CD4-positive, alpha-beta memory T cell (primary cell): ENCODE measurements at regions of chr15 and their contacts with region 1.

Region 1: GRCh38 chr15:89358755-89359439 is 24.3 kb upstream of the POLG start:
- DNase-seq: peak; percentile 74 to 85 (median 80)
- H3K4me3 ChIP-seq: peak overlapping the region in 1 of 2 donors; percentile 61
- H3K4me3 Mint-ChIP-seq: peak overlapping the region; percentile 73 to 87 (median 84)
- H3K27ac ChIP-seq: no peak overlapping the region
- H3K27ac Mint-ChIP-seq: peak overlapping the region in 3 of 7 donors; percentile 47 to 60 (median 59)
- H3K4me1 ChIP-seq: peaks cover 17% of the 10 kb centered on the region
- H3K4me1 Mint-ChIP-seq: peaks cover 0 to 33% (median 11%) of the 10 kb centered on the region in 4 donors
- H3K27me3 ChIP-seq: peaks cover 58% of the 10 kb centered on the region
- H3K27me3 Mint-ChIP-seq: peaks cover 59 to 68% of the 10 kb centered on the region in 2 donors

Region 2: GRCh38 chr15:89321521-89322410 is 37.1 kb before region 1 on chr15:
- CTCF ChIA-PET with region 1: interaction called, 28 read pairs
- POLR2A ChIA-PET with region 1: no interaction called
- intact Hi-C with region 1: no loop called
- DNase-seq: no peak
- H3K4me3 ChIP-seq: no peak overlapping the region
- H3K4me3 Mint-ChIP-seq: no peak overlapping the region
- H3K27ac ChIP-seq: no peak overlapping the region
- H3K27ac Mint-ChIP-seq: peak overlapping the region in 4 of 7 donors; percentile 10 to 76 (median 58)
- H3K4me1 ChIP-seq: no peaks in the 10 kb centered on the region
- H3K4me1 Mint-ChIP-seq: peaks cover 0 to 28% (median 8%) of the 10 kb centered on the region in 4 donors
- H3K27me3 ChIP-seq: no peaks in the 10 kb centered on the region
- H3K27me3 Mint-ChIP-seq: no peaks in the 10 kb centered on the region

Region 3: GRCh38 chr15:89334510-89335288 is 24.2 kb before region 1 on chr15 and contains the start of gene POLG:
- CTCF ChIA-PET with region 1: interaction called, 73 read pairs
- POLR2A ChIA-PET with region 1: interaction called, 12 read pairs
- intact Hi-C with region 1: loop called (anchors 2 kb)
- DNase-seq: peak; percentile 99 to 100 (median 99)
- H3K4me3 ChIP-seq: peak within 1 kb of the TSS; percentile 81 to 92
- H3K4me3 Mint-ChIP-seq: peak within 1 kb of the TSS; percentile 90 to 100 (median 94)
- H3K27ac ChIP-seq: peak within 1 kb of the TSS; percentile 69
- H3K27ac Mint-ChIP-seq: peak within 1 kb of the TSS; percentile 88 to 100 (median 98)
- H3K4me1 ChIP-seq: peaks cover 54% of the 10 kb centered on the region
- H3K4me1 Mint-ChIP-seq: peaks cover 37 to 59% (median 47%) of the 10 kb centered on the region in 4 donors
- H3K27me3 ChIP-seq: no peaks in the 10 kb centered on the region
- H3K27me3 Mint-ChIP-seq: peaks cover 2 to 7% of the 10 kb centered on the region in 2 donors
- total RNA-seq, gene POLG: 148 to 151 TPM

Region 4: GRCh38 chr15:89371228-89372079 is 12.6 kb after region 1 on chr15:
- CTCF ChIA-PET with region 1: interaction called, 19 read pairs
- POLR2A ChIA-PET with region 1: no interaction called
- intact Hi-C with region 1: no loop called
- DNase-seq: no peak
- H3K4me3 ChIP-seq: no peak overlapping the region
- H3K4me3 Mint-ChIP-seq: no peak overlapping the region
- H3K27ac ChIP-seq: no peak overlapping the region
- H3K27ac Mint-ChIP-seq: no peak overlapping the region
- H3K4me1 ChIP-seq: peaks cover 20% of the 10 kb centered on the region
- H3K4me1 Mint-ChIP-seq: peaks cover 7 to 27% (median 14%) of the 10 kb centered on the region in 4 donors
- H3K27me3 ChIP-seq: peaks cover 43% of the 10 kb centered on the region
- H3K27me3 Mint-ChIP-seq: peaks cover 54 to 57% of the 10 kb centered on the region in 2 donors

Region 5: DNA sequence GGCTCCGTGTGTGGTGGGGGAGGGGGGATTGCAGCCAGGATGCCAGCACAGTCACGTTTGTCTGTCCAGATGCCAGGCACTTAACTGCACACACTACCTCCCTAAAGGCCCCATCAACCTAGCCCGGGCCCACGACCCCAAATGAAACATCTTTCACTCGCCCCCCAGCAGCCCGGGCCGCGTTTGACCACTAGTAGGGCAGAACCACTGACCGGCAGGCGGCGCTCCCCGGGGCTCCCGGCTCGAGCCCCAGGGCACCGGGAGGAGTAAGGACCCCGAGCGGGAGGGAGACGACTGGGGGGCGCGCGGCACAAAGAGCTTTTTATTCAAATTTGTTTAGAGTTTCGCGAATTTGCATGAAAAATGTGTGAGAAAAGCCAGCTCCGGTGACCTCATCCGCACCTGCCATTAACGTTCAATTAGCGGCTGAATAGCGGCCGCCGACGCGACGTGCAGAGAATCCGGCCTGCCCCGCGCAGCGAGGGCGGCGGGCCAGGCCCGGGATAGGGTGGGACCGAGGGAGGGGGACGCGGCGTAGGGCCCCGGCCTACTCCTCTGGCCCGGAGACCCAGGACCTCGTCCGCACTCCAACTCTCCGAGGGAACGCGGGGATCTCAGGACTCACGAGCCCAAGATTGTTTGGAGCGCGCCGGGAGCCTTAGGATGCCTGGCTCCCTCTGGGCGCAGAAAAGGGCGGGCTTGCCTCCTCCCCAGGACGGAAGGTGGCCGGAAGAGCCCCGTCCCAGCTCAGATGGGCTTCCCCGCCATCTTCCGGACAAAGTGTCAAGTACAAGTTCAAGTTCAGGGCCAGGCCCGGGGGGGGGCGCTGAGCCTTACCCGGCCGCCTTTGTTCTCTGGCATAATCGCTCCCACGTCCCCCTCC is 40.6 kb after region 1 on chr15:
- CTCF ChIA-PET with region 1: interaction called, 18 read pairs
- POLR2A ChIA-PET with region 1: no interaction called
- intact Hi-C with region 1: loop called (anchors 2 kb)
- DNase-seq: peak in 1 of 5 donors; percentile 48
- H3K4me3 ChIP-seq: peak overlapping the region; percentile 29 to 38
- H3K4me3 Mint-ChIP-seq: peak overlapping the region; percentile 71 to 84 (median 78)
- H3K27ac ChIP-seq: no peak overlapping the region
- H3K27ac Mint-ChIP-seq: no peak overlapping the region
- H3K4me1 ChIP-seq: peaks cover 9% of the 10 kb centered on the region
- H3K4me1 Mint-ChIP-seq: peaks cover 2 to 16% (median 6%) of the 10 kb centered on the region in 4 donors
- H3K27me3 ChIP-seq: peaks cover 43% of the 10 kb centered on the region
- H3K27me3 Mint-ChIP-seq: peaks cover 43 to 68% of the 10 kb centered on the region in 2 donors

Region 6: GRCh38 chr15:89423981-89424380 is 65.1 kb after region 1 on chr15:
- CTCF ChIA-PET with region 1: interaction called, 133 read pairs
- POLR2A ChIA-PET with region 1: no interaction called
- intact Hi-C with region 1: loop called (anchors 5 kb)
- DNase-seq: no peak
- H3K4me3 ChIP-seq: no peak overlapping the region
- H3K4me3 Mint-ChIP-seq: peak overlapping the region in 1 of 8 donors; percentile 63
- H3K27ac ChIP-seq: no peak overlapping the region
- H3K27ac Mint-ChIP-seq: no peak overlapping the region
- H3K4me1 ChIP-seq: no peaks in the 10 kb centered on the region
- H3K4me1 Mint-ChIP-seq: no peaks in the 10 kb centered on the region
- H3K27me3 ChIP-seq: peaks cover 6% of the 10 kb centered on the region
- H3K27me3 Mint-ChIP-seq: peaks cover 20 to 40% of the 10 kb centered on the region in 2 donors

Region 7: DNA sequence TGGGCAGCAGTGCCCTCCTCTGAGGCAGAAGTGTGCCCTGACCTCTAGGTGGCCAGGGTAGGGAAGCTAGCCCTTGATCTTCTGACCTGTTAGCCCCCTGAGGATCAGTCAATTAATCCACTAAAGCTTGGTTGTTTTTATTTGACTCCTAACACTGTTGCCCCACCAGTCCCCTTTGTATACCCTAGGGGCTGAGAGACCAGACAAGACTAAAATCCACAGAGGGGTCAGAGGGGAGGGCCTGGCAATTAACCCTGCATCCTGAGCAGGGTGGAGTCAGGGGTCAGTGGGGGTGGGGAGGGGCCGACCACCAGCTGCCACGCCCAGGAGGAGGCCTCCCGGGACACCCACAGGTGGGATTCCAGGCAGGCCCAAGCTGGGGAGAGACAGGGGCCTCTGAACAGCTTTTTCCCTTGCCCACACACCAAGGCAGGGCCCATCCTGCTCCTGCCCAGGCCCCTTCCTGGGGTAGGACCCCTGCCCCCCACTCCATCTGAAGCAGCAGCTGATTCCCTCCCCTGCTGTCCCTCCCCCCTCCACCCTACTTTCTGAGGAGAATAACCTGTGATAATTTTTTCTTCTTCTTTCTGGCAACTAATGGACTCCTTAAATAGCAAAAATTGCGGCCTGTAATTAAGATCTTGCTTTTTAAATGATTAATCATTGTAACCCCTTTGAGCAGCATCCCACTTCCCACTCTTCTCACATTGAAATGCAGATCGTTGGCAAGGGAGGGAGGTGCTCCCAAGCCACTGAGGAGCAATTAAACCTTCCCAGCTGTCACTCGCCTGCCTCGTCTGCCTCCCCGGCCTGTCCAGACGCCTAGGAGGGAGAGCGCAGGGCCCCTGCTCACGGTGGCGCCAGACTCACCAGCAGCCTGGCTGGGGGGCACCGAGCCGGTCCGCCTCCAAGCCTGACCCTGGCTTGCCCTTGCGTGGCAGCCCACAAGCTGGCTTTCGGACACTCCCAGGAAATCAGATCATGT is 85.6 kb after region 1 on chr15:
- CTCF ChIA-PET with region 1: interaction called, 10 read pairs
- POLR2A ChIA-PET with region 1: no interaction called
- intact Hi-C with region 1: no loop called
- DNase-seq: no peak
- H3K4me3 ChIP-seq: no peak overlapping the region
- H3K4me3 Mint-ChIP-seq: no peak overlapping the region
- H3K27ac ChIP-seq: no peak overlapping the region
- H3K27ac Mint-ChIP-seq: no peak overlapping the region
- H3K4me1 ChIP-seq: no peaks in the 10 kb centered on the region
- H3K4me1 Mint-ChIP-seq: no peaks in the 10 kb centered on the region
- H3K27me3 ChIP-seq: peaks cover 4% of the 10 kb centered on the region
- H3K27me3 Mint-ChIP-seq: peaks cover 29 to 34% of the 10 kb centered on the region in 2 donors

Region 8: GRCh38 chr15:89514596-89515406 is 155.9 kb after region 1 on chr15:
- CTCF ChIA-PET with region 1: no interaction called
- POLR2A ChIA-PET with region 1: no interaction called
- intact Hi-C with region 1: no loop called
- DNase-seq: no peak
- H3K4me3 ChIP-seq: no peak overlapping the region
- H3K4me3 Mint-ChIP-seq: no peak overlapping the region
- H3K27ac ChIP-seq: no peak overlapping the region
- H3K27ac Mint-ChIP-seq: no peak overlapping the region
- H3K4me1 ChIP-seq: no peaks in the 10 kb centered on the region
- H3K4me1 Mint-ChIP-seq: no peaks in the 10 kb centered on the region
- H3K27me3 ChIP-seq: no peaks in the 10 kb centered on the region
- H3K27me3 Mint-ChIP-seq: peaks cover 17 to 35% of the 10 kb centered on the region in 2 donors